OCI-LY7 (cell line): ENCODE measurements at regions of chr10 and their contacts with region 1.

Region 1: DNA sequence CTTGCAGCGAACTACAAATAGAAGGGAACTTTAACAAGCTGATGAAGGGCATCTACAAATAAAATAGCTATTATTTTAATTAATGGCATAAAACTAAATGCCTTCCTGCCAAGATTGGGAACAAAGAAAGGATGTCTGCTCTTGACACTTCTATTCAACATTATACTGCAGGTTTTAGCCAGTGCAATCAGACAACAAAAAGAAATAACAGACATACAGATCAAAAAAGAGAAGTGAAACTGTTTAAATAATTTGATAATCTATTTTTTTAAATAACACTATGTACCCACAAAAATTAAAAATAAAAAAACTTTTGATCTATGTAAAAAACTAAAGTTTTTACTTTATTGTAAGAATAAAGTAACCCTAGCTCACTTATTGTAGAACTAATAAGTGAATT is 22.4 kb upstream of the TLL2 start:
- DNase-seq: no peak
- H3K4me3 ChIP-seq: no peak overlapping the region
- H3K27ac ChIP-seq: no peak overlapping the region
- H3K4me1 ChIP-seq: peaks cover 10% of the 10 kb centered on the region
- CTCF ChIP-seq: no peak

Region 2: GRCh38 chr10:95767884-95768556 is 768.1 kb before region 1 on chr10:
- CTCF ChIA-PET with region 1: no interaction called
- POLR2A ChIA-PET with region 1: no interaction called
- intact Hi-C with region 1: no loop called
- DNase-seq: peak; percentile 44
- H3K4me3 ChIP-seq: peak overlapping the region; percentile 31
- H3K27ac ChIP-seq: peak overlapping the region; percentile 71
- H3K4me1 ChIP-seq: peaks cover 17% of the 10 kb centered on the region
- CTCF ChIP-seq: no peak

Region 3: DNA sequence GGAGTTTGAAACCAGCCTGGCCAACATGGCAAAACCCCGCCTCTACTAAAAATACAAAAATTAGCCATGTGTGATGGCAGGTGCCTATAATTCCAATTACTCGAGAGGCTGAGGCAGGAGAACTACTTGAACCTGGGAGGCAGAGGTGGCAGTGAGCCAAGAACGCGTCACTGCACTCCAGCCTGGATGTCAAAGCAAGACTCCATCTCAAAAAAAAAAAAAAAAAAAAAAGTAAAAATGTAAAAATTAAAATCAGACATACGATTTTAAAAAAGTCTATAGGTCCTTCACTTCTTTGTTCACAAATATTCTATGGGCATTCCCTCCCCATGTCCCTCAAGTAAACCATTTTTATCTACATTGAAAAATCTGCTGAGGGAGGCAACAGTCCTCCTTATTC is 12.5 kb after region 1 on chr10:
- CTCF ChIA-PET with region 1: no interaction called
- POLR2A ChIA-PET with region 1: interaction called, 12 read pairs
- intact Hi-C with region 1: no loop called
- DNase-seq: no peak
- H3K4me3 ChIP-seq: no peak overlapping the region
- H3K27ac ChIP-seq: no peak overlapping the region
- H3K4me1 ChIP-seq: no peaks in the 10 kb centered on the region
- CTCF ChIP-seq: no peak

Region 4: GRCh38 chr10:96830511-96831199 is 294.5 kb after region 1 on chr10:
- CTCF ChIA-PET with region 1: no interaction called
- POLR2A ChIA-PET with region 1: no interaction called
- intact Hi-C with region 1: no loop called
- DNase-seq: peak; percentile 88
- H3K4me3 ChIP-seq: peak overlapping the region; percentile 95
- H3K27ac ChIP-seq: peak overlapping the region; percentile 89
- H3K4me1 ChIP-seq: peaks cover 45% of the 10 kb centered on the region
- CTCF ChIP-seq: peak; percentile 98

Region 5: DNA sequence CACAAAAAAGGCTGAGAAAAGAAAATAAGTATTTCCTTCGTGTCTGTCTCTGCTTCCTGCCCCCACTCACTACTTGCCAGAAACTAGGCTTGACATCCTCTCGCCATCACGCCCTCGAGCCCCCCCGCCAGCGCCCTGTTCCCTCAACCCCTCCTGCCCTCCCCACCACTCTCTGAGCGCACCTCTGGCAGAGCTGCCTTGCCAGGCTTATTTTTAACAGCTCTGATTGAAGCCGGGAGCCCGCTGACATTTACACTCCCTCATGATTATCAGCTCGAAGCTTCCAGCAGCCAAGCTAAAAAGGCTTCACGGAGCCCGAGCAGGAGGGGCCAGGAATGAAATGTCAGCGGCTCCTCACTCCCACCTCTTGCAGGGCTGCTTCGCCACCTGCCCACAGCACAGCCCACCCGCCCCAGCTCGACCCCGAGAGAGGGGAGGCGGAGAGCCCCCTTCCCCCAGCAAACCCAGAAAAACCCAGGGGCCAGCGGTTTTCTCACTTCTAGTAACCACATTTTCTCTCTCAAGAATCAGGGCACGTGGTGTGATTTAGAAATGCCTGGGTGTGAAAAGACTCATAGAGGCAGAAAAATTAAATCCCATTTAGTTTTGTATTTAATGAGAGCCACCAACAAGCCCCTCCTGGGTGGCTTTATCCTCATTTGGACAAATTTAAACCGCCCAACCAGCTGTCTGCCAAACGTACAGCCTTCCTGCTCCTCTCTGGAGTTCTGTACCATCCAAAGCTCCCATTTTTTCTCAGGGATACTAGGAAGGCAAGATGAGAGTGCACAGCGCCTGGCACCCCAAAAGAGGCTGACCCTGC is 560.3 kb after region 1 on chr10:
- CTCF ChIA-PET with region 1: no interaction called
- POLR2A ChIA-PET with region 1: no interaction called
- intact Hi-C with region 1: no loop called
- DNase-seq: no peak
- H3K4me3 ChIP-seq: no peak overlapping the region
- H3K27ac ChIP-seq: no peak overlapping the region
- H3K4me1 ChIP-seq: no peaks in the 10 kb centered on the region
- CTCF ChIP-seq: no peak